HepG2 (cell line): ENCODE measurements at regions of chr2 and their contacts with region 1.

Region 1: GRCh38 chr2:153403937-153404336 is 74.6 kb downstream of the RPRM start:
- DNase-seq: no peak
- ATAC-seq: no peak
- H3K4me3 ChIP-seq: no peak overlapping the region
- H3K27ac ChIP-seq: no peak overlapping the region
- H3K4me1 ChIP-seq: no peaks in the 10 kb centered on the region
- H3K27me3 ChIP-seq: no peaks in the 10 kb centered on the region
- CTCF ChIP-seq: no peak
- EP300 ChIP-seq: no peak
- POLR2A ChIP-seq: no peak
- RAD21 ChIP-seq: no peak

Region 2: DNA sequence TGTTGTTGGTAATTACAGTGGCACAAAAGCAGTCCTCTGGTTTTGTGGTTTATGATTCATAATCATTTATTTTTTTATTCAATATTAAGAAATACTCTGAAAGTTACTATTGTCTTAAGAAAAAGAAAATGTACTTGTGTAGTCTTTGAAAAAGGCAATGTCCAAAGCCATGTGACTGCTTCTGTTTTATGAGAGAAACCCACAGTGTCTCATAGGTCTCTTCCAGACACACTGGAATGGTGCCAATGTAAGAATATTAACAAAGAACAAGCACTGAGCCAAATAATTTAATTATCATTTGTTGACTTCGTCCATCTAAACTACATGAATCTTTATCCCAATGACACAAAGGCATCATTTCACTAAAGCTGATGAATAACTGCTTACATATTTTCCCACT is 12.1 kb after region 1 on chr2:
- CTCF ChIA-PET with region 1: no interaction called
- POLR2A ChIA-PET with region 1: no interaction called
- in situ Hi-C with region 1: no loop called
- intact Hi-C with region 1: no loop called
- DNase-seq: no peak
- ATAC-seq: no peak
- H3K4me3 ChIP-seq: no peak overlapping the region
- H3K27ac ChIP-seq: no peak overlapping the region
- H3K4me1 ChIP-seq: no peaks in the 10 kb centered on the region
- H3K27me3 ChIP-seq: no peaks in the 10 kb centered on the region
- CTCF ChIP-seq: no peak
- EP300 ChIP-seq: no peak
- POLR2A ChIP-seq: no peak
- RAD21 ChIP-seq: no peak

Region 3: DNA sequence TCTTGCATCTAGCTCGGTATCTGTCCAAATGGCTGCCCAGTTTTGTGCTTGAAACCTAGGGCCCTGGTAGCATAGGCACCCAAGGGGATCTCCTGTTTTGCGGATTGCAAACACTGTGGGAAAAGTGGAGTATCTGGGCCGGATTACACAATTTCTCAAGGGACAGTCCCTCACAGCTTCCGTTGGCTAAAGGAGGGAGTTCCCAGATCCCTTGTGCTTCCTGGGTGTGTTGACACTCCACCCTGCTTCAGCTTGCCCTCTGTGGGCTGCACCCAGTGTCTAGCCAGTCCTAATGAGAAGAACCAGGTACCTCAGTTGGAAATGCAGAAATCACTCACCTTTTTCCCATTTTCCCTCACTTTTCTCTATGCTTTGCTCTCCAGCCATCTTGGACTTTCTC is 39.2 kb after region 1 on chr2:
- CTCF ChIA-PET with region 1: no interaction called
- POLR2A ChIA-PET with region 1: no interaction called
- in situ Hi-C with region 1: no loop called
- intact Hi-C with region 1: loop called (anchors 1 kb)
- DNase-seq: no peak
- ATAC-seq: no peak
- H3K4me3 ChIP-seq: no peak overlapping the region
- H3K27ac ChIP-seq: no peak overlapping the region
- H3K4me1 ChIP-seq: no peaks in the 10 kb centered on the region
- H3K27me3 ChIP-seq: no peaks in the 10 kb centered on the region
- CTCF ChIP-seq: no peak
- EP300 ChIP-seq: no peak
- POLR2A ChIP-seq: no peak
- RAD21 ChIP-seq: no peak